AG04449 (cell line): ENCODE measurements at regions of chr6 and their contacts with region 1.

Region 1: DNA sequence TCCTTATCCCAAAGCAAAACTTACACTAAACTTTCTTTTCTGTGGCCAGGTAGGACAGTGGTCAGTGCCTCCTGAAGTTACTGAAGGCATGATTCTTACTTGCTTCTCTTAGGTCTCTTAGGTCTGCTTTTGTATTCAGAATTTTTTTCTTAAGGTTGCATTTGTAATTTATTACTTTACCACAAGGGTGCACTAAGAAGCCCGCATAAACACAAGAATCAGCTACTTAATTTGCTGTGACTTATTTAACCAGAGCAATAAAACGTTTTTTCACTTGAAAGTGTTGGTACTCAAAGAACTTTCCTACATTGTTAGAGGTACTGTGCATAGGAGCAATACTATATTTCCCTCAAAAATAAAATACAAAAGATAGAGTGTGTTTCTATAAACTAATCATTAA is 75.4 kb upstream of the LAMA2 start:
- DNase-seq: peak; percentile 19
- H3K4me3 ChIP-seq: no peak overlapping the region
- CTCF ChIP-seq: peak; percentile 16

Region 2: DNA sequence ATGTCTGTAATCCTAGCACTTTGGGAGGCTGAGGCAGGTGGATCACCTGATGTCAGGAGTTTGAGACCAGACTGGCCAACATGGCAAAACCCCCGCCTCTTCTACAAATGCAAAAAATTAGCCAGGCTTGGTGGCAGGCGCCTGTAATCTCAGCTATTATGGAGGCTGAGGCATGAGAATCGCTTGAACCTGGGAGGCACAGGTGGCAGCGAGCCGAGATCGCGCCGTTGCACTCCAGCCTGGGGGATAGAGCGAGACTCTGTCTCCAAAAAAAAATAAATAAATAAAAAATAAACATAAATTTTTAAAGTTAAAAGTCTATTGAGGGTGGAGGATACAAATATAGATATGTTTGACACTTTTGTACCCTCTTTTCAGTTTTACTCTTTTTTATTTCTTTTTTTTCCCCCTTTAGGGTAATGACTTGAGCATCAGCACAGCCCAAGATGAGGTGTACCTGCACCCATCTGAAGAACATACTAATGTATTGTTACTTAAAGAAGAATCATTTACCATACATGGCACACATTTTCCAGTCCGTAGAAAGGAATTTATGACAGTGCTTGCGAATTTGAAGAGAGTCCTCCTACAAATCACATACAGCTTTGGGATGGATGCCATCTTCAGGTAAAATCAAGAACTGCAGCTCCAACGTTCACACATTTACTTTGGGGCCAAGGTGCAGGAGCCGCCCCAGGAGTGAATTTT is 444.2 kb after region 1 on chr6:
- CTCF ChIA-PET with region 1: interaction called, 115 read pairs
- POLR2A ChIA-PET with region 1: no interaction called
- DNase-seq: peak; percentile 31
- H3K4me3 ChIP-seq: no peak overlapping the region
- CTCF ChIP-seq: peak; percentile 73

Region 3: GRCh38 chr6:129264480-129265045 is 457.0 kb after region 1 on chr6:
- CTCF ChIA-PET with region 1: interaction called, 20 read pairs
- POLR2A ChIA-PET with region 1: no interaction called
- DNase-seq: no peak
- H3K4me3 ChIP-seq: no peak overlapping the region
- CTCF ChIP-seq: no peak